Activated T-helper 1 cell treated with anti-CD3 and anti-CD28 coated beads, Interleukin-12 subunit alpha, Interleukin-12 subunit beta, Interleukin-2, Interleukin-4 antibody, amounts not matched to agents 30 ng/mL and 10 ng/mL and 1 ng/mL, durations not matched to agents 14 hours and 24 hours and 36 hours (primary cell): ENCODE measurements at regions of chr6 and their contacts with region 1.

Region 1: DNA sequence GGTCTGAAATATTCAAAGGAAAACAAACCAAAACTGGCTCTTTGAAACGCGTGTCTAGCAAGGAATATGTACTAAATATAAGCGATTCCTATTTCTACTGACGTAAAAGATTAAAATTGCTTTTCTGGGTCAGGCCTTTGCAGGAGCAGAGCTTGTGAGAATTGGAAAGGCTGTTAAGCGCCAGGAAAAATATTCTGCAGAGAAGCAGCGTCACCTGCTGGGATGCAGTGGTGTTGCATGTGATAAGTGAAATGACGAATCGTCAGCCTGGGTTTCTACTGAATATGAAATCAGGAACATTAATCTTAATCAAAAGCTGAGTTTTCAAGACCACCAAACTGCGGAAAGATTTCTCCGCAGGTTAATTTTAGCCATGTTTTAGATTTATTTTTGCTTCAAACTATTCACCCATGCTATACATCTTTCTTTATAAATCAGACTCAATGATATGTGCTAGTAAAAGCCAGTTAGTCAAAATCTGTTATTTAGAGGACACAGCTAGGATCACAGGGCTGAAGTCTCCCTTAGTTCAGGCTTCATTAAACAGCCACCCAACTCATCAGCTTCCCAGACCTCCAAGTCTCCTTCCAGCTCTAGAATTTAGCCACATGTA is 67.4 kb downstream of the ALDH8A1 start:
- DNase-seq: peak; percentile 31
- H3K4me3 Mint-ChIP-seq: no peak overlapping the region
- H3K27ac Mint-ChIP-seq: no peak overlapping the region
- H3K4me1 Mint-ChIP-seq: no peaks in the 10 kb centered on the region
- H3K27me3 Mint-ChIP-seq: peaks cover 24% of the 10 kb centered on the region

Region 2: GRCh38 chr6:134111062-134111677 is 771.4 kb before region 1 on chr6:
- intact Hi-C with region 1: loop called (anchors 1 kb)
- DNase-seq: peak; percentile 24
- H3K4me3 Mint-ChIP-seq: no peak overlapping the region
- H3K27ac Mint-ChIP-seq: no peak overlapping the region
- H3K4me1 Mint-ChIP-seq: peaks cover 12% of the 10 kb centered on the region
- H3K27me3 Mint-ChIP-seq: peaks cover 9% of the 10 kb centered on the region

Region 3: GRCh38 chr6:134123666-134124208 is 758.8 kb before region 1 on chr6:
- intact Hi-C with region 1: loop called (anchors 1 kb)
- DNase-seq: no peak
- H3K4me3 Mint-ChIP-seq: no peak overlapping the region
- H3K27ac Mint-ChIP-seq: no peak overlapping the region
- H3K4me1 Mint-ChIP-seq: no peaks in the 10 kb centered on the region
- H3K27me3 Mint-ChIP-seq: peaks cover 3% of the 10 kb centered on the region

Region 4: GRCh38 chr6:134161036-134161435 is 721.5 kb before region 1 on chr6:
- intact Hi-C with region 1: loop called (anchors 1 kb)
- DNase-seq: no peak
- H3K4me3 Mint-ChIP-seq: no peak overlapping the region
- H3K27ac Mint-ChIP-seq: no peak overlapping the region
- H3K4me1 Mint-ChIP-seq: peaks cover 5% of the 10 kb centered on the region
- H3K27me3 Mint-ChIP-seq: no peaks in the 10 kb centered on the region